Activated T-helper 2 cell treated with anti-CD3 and anti-CD28 coated beads, Interferon-gamma antibody, Interleukin-2, Interleukin-4, amounts not matched to agents 10 μg/mL and 5 μg/mL and 100 μg/mL, durations not matched to agents 14 hours and 24 hours and 36 hours (primary cell): ENCODE measurements at regions of chr13 and their contacts with region 1.

Region 1: GRCh38 chr13:75760131-75761021 is 124.2 kb downstream of the LMO7 start:
- DNase-seq: no peak
- H3K4me3 Mint-ChIP-seq: peak overlapping the region; percentile 71
- H3K27ac Mint-ChIP-seq: peak overlapping the region; percentile 63
- H3K4me1 Mint-ChIP-seq: peaks cover 65% of the 10 kb centered on the region
- H3K27me3 Mint-ChIP-seq: no peaks in the 10 kb centered on the region

Region 2: GRCh38 chr13:75694722-75695121 is 65.7 kb before region 1 on chr13:
- intact Hi-C with region 1: loop called (anchors 5 kb)
- DNase-seq: no peak
- H3K4me3 Mint-ChIP-seq: no peak overlapping the region
- H3K27ac Mint-ChIP-seq: no peak overlapping the region
- H3K4me1 Mint-ChIP-seq: no peaks in the 10 kb centered on the region
- H3K27me3 Mint-ChIP-seq: no peaks in the 10 kb centered on the region

Region 3: GRCh38 chr13:75803164-75803611 is 42.8 kb after region 1 on chr13:
- intact Hi-C with region 1: loop called (anchors 1 kb)
- DNase-seq: no peak
- H3K4me3 Mint-ChIP-seq: no peak overlapping the region
- H3K27ac Mint-ChIP-seq: no peak overlapping the region
- H3K4me1 Mint-ChIP-seq: peaks cover 46% of the 10 kb centered on the region
- H3K27me3 Mint-ChIP-seq: no peaks in the 10 kb centered on the region

Region 4: GRCh38 chr13:75836441-75836840 is 76.1 kb after region 1 on chr13:
- intact Hi-C with region 1: no loop called
- DNase-seq: no peak
- H3K4me3 Mint-ChIP-seq: no peak overlapping the region
- H3K27ac Mint-ChIP-seq: no peak overlapping the region
- H3K4me1 Mint-ChIP-seq: no peaks in the 10 kb centered on the region
- H3K27me3 Mint-ChIP-seq: no peaks in the 10 kb centered on the region

Region 5: DNA sequence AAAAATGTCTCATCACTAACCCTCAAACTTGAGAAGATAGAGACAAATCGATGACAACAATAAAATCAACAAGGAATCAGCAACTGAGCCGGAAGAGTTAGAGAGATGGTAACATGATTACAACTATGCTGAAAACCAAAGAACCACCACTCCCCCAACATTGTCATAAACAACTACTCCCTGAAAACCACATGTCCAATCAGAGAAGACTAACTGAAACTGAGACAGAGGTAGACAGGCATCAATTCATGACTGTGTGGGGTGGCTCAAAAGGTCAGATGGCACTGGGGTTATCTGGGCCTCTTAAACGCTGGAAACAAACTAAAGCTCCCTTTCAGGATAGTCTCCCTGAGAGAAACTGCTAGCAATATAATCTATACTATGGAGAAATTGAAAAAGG is 637.0 kb after region 1 on chr13:
- intact Hi-C with region 1: loop called (anchors 5 kb)
- DNase-seq: peak; percentile 11
- H3K4me3 Mint-ChIP-seq: no peak overlapping the region
- H3K27ac Mint-ChIP-seq: peak overlapping the region; percentile 73
- H3K4me1 Mint-ChIP-seq: peaks cover 12% of the 10 kb centered on the region
- H3K27me3 Mint-ChIP-seq: no peaks in the 10 kb centered on the region